MCF 10A (cell line): ENCODE measurements at regions of chr1 and their contacts with region 1.

Region 1: DNA sequence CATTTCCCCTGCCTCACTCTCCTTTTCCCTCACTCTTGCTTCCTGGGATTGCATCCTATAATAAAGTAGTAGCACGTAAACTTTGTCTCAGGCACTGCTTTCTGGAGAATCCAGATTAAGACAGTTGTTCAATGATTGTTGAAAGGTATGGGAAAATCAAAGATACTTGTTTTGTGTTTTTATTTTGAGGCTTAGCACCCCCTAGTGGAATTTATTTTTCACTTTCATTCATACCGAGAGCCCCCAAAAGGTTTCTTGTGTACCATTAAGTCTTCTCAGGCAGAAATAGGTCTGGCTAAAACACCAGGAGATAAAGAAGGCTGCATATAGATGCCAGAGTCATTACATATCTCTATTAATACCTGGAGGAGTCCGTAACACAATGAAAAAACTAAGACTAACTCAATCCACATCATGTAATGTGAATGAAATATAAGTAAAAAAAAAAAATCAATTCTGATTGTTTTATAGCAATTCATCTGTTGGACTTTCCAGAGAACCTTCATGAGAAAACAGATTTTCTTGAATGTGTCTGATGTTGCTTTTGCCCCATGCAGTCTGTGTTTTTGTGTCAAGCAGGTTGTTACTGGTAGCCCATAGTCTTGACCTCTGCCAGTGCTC is 103.5 kb downstream of the RPE65 start:
- DNase-seq: peak; percentile 35
- H3K4me3 Mint-ChIP-seq: no peak overlapping the region
- H3K27ac Mint-ChIP-seq: no peak overlapping the region
- H3K4me1 Mint-ChIP-seq: no peaks in the 10 kb centered on the region
- H3K27me3 Mint-ChIP-seq: peaks cover 8% of the 10 kb centered on the region
- CTCF ChIP-seq: peak; percentile 24

Region 2: GRCh38 chr1:67853704-67854103 is 492.6 kb before region 1 on chr1:
- CTCF ChIA-PET with region 1: interaction called, 14 read pairs
- POLR2A ChIA-PET with region 1: no interaction called
- intact Hi-C with region 1: loop called (anchors 2 kb)
- DNase-seq: peak; percentile 71
- H3K4me3 Mint-ChIP-seq: no peak overlapping the region
- H3K27ac Mint-ChIP-seq: no peak overlapping the region
- H3K4me1 Mint-ChIP-seq: peaks cover 16% of the 10 kb centered on the region
- H3K27me3 Mint-ChIP-seq: no peaks in the 10 kb centered on the region
- CTCF ChIP-seq: peak; percentile 92

Region 3: GRCh38 chr1:68173911-68174737 is 172.2 kb before region 1 on chr1:
- CTCF ChIA-PET with region 1: interaction called, 11 read pairs
- POLR2A ChIA-PET with region 1: no interaction called
- intact Hi-C with region 1: no loop called
- DNase-seq: peak; percentile 95
- H3K4me3 Mint-ChIP-seq: peak overlapping the region; percentile 68
- H3K27ac Mint-ChIP-seq: peak overlapping the region; percentile 92
- H3K4me1 Mint-ChIP-seq: peaks cover 45% of the 10 kb centered on the region
- H3K27me3 Mint-ChIP-seq: no peaks in the 10 kb centered on the region
- CTCF ChIP-seq: no peak

Region 4: GRCh38 chr1:68202239-68202832 is 144.0 kb before region 1 on chr1:
- CTCF ChIA-PET with region 1: no interaction called
- POLR2A ChIA-PET with region 1: no interaction called
- intact Hi-C with region 1: no loop called
- DNase-seq: no peak
- H3K4me3 Mint-ChIP-seq: no peak overlapping the region
- H3K27ac Mint-ChIP-seq: no peak overlapping the region
- H3K4me1 Mint-ChIP-seq: peaks cover 35% of the 10 kb centered on the region
- H3K27me3 Mint-ChIP-seq: no peaks in the 10 kb centered on the region
- CTCF ChIP-seq: no peak

Region 5: DNA sequence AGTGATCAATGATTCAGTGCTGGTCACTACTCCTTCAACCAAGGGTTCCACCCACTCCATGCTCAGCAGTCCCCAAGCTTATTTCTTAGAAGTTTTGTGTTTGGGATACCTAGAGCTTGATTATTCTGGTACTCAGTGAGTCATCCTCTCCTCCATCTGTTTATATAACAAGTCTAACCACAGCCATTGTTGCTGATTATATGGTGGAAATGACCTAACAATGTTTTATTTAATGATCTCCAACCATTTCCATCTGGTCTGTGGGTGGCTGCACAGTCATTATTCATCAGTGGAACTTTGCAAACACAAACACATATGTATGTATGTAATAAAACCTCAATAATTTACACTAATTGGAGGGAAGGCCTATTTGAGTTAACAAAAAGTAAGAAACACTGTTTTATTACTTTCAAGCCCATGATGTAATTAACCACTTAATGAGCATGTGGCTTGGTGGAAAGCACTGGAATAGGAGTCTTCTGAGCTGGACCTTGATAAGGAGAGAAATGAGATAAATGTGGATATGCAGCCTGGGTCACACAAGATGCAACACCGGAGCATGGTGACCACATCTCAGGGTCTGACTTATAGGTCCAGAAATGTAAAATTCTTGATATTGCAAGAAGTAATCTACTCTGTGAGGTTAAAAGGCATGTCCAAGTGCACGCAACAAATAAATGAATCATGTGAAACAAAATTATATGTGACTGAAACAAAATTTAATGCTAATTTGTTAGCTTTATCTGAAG is 15.0 kb before region 1 on chr1:
- CTCF ChIA-PET with region 1: interaction called, 10 read pairs
- POLR2A ChIA-PET with region 1: no interaction called
- intact Hi-C with region 1: no loop called
- DNase-seq: peak; percentile 67
- H3K4me3 Mint-ChIP-seq: no peak overlapping the region
- H3K27ac Mint-ChIP-seq: peak overlapping the region; percentile 11
- H3K4me1 Mint-ChIP-seq: peaks cover 27% of the 10 kb centered on the region
- H3K27me3 Mint-ChIP-seq: no peaks in the 10 kb centered on the region
- CTCF ChIP-seq: no peak

Region 6: GRCh38 chr1:68375919-68376318 is 29.6 kb after region 1 on chr1:
- CTCF ChIA-PET with region 1: interaction called, 12 read pairs
- POLR2A ChIA-PET with region 1: no interaction called
- intact Hi-C with region 1: no loop called
- DNase-seq: no peak
- H3K4me3 Mint-ChIP-seq: no peak overlapping the region
- H3K27ac Mint-ChIP-seq: no peak overlapping the region
- H3K4me1 Mint-ChIP-seq: peaks cover 21% of the 10 kb centered on the region
- H3K27me3 Mint-ChIP-seq: no peaks in the 10 kb centered on the region
- CTCF ChIP-seq: no peak

Region 7: DNA sequence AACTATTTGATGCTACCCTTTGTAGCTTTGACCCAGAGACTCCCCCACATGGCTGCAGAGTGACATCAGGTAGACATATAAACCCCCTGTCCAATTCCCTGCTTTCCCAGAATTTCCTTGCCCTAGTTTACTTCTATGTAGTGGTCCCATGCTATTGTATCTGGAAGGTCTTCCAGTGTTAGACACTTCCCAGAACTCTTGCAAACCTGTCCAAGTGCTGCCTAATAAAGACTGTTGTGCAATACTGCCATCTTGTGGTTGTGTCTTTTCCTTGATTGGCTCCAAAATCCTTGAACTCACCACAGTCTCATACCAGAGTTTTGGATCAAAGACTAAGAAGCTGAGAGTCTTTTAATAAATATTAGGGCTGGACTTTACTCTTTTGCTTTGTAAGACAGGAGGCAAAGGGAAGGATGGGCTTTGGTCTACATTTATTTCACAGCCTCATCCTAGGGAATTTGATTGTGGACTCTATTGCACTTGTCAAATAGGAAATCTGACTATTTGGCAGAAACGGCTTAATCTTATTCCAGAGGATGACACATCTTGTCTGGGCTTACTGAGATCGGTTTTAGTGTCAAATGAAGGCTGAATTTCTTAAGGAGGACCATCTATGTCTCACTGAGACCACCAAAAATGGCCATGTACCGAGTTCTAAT is 1391.4 kb after region 1 on chr1:
- CTCF ChIA-PET with region 1: interaction called, 3 read pairs
- POLR2A ChIA-PET with region 1: no interaction called
- intact Hi-C with region 1: loop called (anchors 5 kb)
- DNase-seq: peak; percentile 77
- H3K4me3 Mint-ChIP-seq: no peak overlapping the region
- H3K27ac Mint-ChIP-seq: no peak overlapping the region
- H3K4me1 Mint-ChIP-seq: no peaks in the 10 kb centered on the region
- H3K27me3 Mint-ChIP-seq: peaks cover 87% of the 10 kb centered on the region
- CTCF ChIP-seq: peak; percentile 55